ENCODE measurements at regions of chr12 and their contacts with region 1.

Region 1: DNA sequence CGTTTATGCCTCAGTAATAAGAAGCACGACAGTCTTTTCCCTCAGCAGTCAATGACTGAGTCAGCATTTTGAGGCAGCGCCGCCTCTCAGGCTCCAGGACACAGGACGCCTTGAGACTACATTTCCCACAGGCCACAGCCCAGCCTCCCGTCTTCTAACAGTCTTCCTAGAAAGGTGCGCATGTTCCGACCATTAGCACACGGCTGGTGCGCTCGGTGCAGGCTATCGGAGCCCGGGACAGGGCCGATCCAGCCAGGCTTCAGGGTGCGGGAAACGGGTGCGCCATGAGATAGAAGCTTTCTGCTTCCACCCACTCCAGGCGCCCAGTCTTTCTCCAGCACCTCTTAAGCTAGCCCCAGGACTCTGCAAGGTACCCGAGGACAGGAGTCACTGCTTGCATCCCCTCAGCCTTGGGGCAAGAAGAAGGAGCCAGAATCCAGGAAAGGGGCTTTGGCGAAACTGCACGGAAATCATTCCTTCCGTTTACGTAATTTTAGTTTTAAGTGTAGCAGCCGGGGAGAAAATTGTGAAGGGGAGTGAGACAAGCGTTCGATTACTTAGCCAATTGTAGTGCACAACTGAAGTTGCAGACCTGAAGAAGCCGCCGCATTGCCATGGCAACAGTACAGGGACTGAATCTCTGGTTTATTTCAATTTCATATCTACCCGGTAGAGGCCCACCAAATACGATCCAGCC is 54.0 kb downstream of the ZNF641 start:
- DNase-seq: peak; percentile 75
- H3K4me3 ChIP-seq: peak overlapping the region in 2 of 3 experiments; percentile 51
- H3K27ac ChIP-seq: no peak overlapping the region
- H3K4me1 ChIP-seq: no peaks in the 10 kb centered on the region
- H3K27me3 ChIP-seq: no peaks in the 10 kb centered on the region
- CTCF ChIP-seq: no peak
- POLR2A ChIP-seq: no peak

Region 2: GRCh38 chr12:48542300-48542928 is 245.7 kb after region 1 on chr12:
- CTCF ChIA-PET with region 1: no interaction called
- POLR2A ChIA-PET with region 1: no interaction called
- dilution Hi-C with region 1: no loop called
- intact Hi-C with region 1: loop called (anchors 10 kb)
- DNase-seq: peak; percentile 41
- H3K4me3 ChIP-seq: no peak overlapping the region
- H3K27ac ChIP-seq: no peak overlapping the region
- H3K4me1 ChIP-seq: no peaks in the 10 kb centered on the region
- H3K27me3 ChIP-seq: peaks cover 2 to 4% of the 10 kb centered on the region in 2 experiments
- CTCF ChIP-seq: peak; percentile 64 to 76
- POLR2A ChIP-seq: no peak